Activated naive CD4-positive, alpha-beta T cell treated with anti-CD3 and anti-CD28 coated beads, Interleukin-2, amount 10 ng/mL, durations not matched to agents 7 days and 5 days (primary cell): ENCODE measurements at regions of chr1 and their contacts with region 1.

Region 1: DNA sequence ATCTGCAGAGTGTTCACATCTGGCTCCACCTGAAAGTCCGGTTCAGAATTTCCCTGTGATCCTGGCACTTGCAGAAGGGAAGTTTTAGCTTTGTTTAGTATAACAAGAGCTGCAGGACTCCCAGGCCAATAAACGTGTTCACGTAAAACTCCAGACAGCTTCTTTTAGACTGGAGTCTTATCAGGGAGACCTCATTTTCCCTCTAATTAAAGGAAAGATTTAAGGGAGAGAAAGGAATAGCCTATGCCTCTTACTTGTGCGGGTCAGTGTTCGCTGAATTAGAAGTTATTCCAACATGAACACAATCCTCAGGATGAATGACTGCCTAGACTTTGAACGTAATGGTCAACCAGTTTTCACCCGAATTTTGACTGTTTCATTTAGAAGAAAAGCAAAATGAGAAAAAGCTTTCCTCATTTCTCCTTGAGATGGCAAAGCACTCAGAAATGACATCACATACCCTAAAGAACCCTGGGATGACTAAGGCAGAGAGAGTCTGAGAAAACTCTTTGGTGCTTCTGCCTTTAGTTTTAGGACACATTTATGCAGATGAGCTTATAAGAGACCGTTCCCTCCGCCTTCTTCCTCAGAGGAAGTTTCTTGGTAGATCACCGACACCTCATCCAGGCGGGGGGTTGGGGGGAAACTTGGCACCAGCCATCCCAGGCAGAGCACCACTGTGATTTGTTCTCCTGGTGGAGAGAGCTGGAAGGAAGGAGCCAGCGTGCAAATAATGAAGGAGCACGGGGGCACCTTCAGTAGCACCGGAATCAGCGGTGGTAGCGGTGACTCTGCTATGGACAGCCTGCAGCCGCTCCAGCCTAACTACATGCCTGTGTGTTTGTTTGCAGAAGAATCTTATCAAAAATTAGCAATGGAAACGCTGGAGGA is 202.1 kb upstream of the SGIP1 start:
- DNase-seq: peak; percentile 63
- H3K4me3 Mint-ChIP-seq: peak overlapping the region; percentile 98
- H3K27ac Mint-ChIP-seq: peak overlapping the region; percentile 98
- H3K4me1 Mint-ChIP-seq: peaks cover 48% of the 10 kb centered on the region
- H3K27me3 Mint-ChIP-seq: no peaks in the 10 kb centered on the region

Region 2: DNA sequence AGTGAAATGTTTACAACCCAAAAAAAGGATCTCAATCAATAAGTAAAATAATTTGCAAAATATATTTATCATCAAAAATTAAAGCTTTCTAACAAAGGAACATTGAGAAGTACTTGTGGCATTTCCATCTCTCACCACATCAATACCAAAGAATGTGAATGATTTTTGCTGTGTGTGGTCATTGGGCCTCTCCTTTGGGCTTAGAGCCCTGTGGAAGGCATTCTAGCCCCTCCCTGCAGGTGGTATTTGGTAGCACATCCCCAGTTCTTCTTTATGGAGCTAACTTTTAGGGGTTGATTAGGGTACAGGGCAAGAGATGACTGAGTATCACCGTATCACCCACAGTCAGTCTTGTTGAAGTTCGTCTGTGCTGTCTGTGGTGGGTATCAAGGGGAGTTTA is 92.1 kb before region 1 on chr1:
- CTCF ChIA-PET with region 1: no interaction called
- DNase-seq: no peak
- H3K4me3 Mint-ChIP-seq: no peak overlapping the region
- H3K27ac Mint-ChIP-seq: no peak overlapping the region
- H3K4me1 Mint-ChIP-seq: peaks cover 3% of the 10 kb centered on the region
- H3K27me3 Mint-ChIP-seq: peaks cover 10% of the 10 kb centered on the region

Region 3: GRCh38 chr1:66253330-66253921 is 78.5 kb before region 1 on chr1:
- CTCF ChIA-PET with region 1: interaction called, 11 read pairs
- DNase-seq: no peak
- H3K4me3 Mint-ChIP-seq: no peak overlapping the region
- H3K27ac Mint-ChIP-seq: no peak overlapping the region
- H3K4me1 Mint-ChIP-seq: peaks cover 58% of the 10 kb centered on the region
- H3K27me3 Mint-ChIP-seq: no peaks in the 10 kb centered on the region

Region 4: DNA sequence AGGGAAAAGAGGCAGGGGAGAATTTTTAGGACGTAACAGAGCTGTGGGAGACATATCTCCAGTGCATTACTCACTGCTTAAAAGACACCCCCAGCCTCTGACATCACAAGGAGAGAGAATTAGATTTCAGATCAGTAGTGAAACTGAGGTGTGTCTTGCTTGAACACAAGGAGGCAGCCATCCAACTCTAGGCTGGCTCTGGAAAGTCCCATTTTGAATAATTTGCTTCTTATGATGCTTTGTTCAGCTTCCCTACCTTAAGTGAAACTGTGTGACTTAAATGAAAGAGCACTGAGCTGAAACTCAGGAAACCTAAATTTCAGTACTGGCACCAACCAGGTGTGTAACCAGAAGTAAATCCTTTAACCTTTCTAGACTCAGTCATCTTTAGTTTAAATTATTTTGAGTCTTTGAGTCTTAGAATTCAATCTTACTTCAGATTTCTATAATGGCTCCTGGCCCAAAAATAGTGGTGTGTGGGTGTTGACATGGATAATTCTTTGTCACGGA is 49.5 kb before region 1 on chr1:
- CTCF ChIA-PET with region 1: interaction called, 16 read pairs
- DNase-seq: peak; percentile 77
- H3K4me3 Mint-ChIP-seq: no peak overlapping the region
- H3K27ac Mint-ChIP-seq: peak overlapping the region; percentile 90
- H3K4me1 Mint-ChIP-seq: peaks cover 92% of the 10 kb centered on the region
- H3K27me3 Mint-ChIP-seq: no peaks in the 10 kb centered on the region

Region 5: GRCh38 chr1:66300972-66301451 is 30.9 kb before region 1 on chr1:
- CTCF ChIA-PET with region 1: interaction called, 10 read pairs
- DNase-seq: peak; percentile 42
- H3K4me3 Mint-ChIP-seq: peak overlapping the region; percentile 69
- H3K27ac Mint-ChIP-seq: peak overlapping the region; percentile 89
- H3K4me1 Mint-ChIP-seq: peaks cover 34% of the 10 kb centered on the region
- H3K27me3 Mint-ChIP-seq: no peaks in the 10 kb centered on the region

Region 6: DNA sequence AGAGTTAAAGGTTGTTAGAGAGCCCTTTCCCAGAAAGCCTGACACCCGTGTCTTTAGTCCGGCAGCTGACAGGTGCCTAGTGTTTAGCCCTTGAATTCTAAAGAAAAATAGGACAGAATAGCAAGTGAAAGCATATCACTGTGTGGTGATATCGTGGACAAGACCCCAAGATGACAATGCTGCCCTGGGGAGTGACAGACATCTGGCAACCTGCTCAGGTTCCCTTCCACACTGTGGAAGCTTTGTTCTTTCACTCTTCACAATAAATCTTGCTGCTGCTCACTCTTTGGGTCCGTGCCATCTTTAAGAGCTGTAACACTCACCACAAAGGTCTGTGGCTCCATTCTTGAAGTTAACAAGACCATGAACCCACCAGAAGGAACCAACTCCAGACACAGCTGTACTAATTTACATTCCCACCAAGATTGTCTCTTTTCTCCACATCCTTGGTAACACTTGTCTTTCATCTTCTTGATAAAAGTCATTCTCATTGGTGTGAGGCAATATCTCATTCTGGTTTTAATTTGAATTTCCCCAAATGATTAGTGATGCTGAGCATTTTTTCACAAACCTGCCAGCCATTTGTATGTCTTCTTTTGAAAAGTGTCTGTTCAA is 94.4 kb after region 1 on chr1:
- CTCF ChIA-PET with region 1: no interaction called
- DNase-seq: no peak
- H3K4me3 Mint-ChIP-seq: no peak overlapping the region
- H3K27ac Mint-ChIP-seq: no peak overlapping the region
- H3K4me1 Mint-ChIP-seq: peaks cover 6% of the 10 kb centered on the region
- H3K27me3 Mint-ChIP-seq: peaks cover 4% of the 10 kb centered on the region